ENCODE measurements at regions of chr6 and their contacts with region 1.

Region 1: GRCh38 chr6:168582571-168582981 is 141.6 kb downstream of the SMOC2 start:
- DNase-seq: no peak
- ATAC-seq: no peak; the same call in 1 of the 2 replicates
- H3K4me3 ChIP-seq: no peak overlapping the region
- H3K27ac ChIP-seq: no peak overlapping the region
- H3K4me1 ChIP-seq: no peaks in the 10 kb centered on the region
- H3K27me3 ChIP-seq: peaks cover 34% of the 10 kb centered on the region
- CTCF ChIP-seq: no peak

Region 2: GRCh38 chr6:167796192-167796996 is 786.2 kb before region 1 on chr6:
- CTCF ChIA-PET with region 1: no interaction called
- POLR2A ChIA-PET with region 1: interaction called, 10 read pairs
- in situ Hi-C with region 1: no loop called
- intact Hi-C with region 1: no loop called
- DNase-seq: no peak
- ATAC-seq: peak; percentile 65; the same call in 1 of the 2 replicates
- H3K4me3 ChIP-seq: no peak overlapping the region
- H3K27ac ChIP-seq: no peak overlapping the region
- H3K4me1 ChIP-seq: no peaks in the 10 kb centered on the region
- H3K27me3 ChIP-seq: no peaks in the 10 kb centered on the region
- CTCF ChIP-seq: no peak

Measured in Panc1 (cell line).